Body of pancreas (tissue), 4 donors: ENCODE measurements at regions of chr14 and their contacts with region 1.

Region 1: DNA sequence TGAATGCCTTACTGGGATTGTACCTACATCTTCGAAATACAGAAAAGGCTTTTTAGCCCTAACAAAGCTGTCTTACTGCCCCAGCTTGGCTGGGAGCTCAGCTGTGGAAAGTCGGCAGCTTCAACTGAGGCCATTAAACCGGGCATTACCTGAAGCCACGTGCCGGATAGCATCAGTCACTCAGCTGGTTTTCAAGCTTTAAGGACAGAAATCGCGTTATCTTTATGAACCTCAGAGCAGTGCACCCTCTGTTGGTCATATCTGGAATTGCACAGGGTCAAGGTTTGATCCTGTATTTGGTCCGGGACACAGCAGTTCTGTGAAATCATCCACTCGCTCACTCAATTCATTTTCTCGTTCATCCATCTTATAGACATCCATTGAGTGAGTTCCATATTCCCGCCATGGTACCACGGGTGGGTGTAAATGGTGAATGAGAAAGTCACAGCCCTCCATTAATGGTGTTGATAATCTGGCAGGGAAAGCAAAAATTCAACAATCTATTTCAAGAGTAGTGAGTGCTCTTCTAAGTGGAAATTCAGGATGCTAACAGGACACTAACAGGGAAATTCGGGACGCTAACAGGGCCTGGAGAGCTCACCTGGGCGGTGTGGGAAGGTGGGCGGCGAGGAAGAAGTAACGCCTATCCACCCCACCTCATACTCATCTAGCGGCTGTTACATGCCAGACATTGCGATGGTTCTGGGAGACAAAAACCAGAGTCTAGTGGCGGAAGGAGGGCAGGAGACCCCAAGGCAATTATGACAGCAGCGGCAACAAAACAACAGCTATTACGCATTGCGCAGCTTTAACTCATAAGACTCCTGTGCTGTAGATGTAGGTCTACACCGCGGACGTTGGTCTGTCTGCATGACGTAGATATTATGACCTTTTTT is 60.6 kb upstream of the TCL1A start:
- DNase-seq: peak; percentile 69 to 80 (median 70)
- ATAC-seq: peak; percentile 74
- H3K4me3 ChIP-seq: no peak overlapping the region
- H3K27ac ChIP-seq: no peak overlapping the region
- H3K4me1 ChIP-seq: no peaks in the 10 kb centered on the region
- H3K27me3 ChIP-seq: no peaks in the 10 kb centered on the region
- CTCF ChIP-seq: peak; percentile 84 to 92 (median 89)
- POLR2A ChIP-seq: no peak

Region 2: DNA sequence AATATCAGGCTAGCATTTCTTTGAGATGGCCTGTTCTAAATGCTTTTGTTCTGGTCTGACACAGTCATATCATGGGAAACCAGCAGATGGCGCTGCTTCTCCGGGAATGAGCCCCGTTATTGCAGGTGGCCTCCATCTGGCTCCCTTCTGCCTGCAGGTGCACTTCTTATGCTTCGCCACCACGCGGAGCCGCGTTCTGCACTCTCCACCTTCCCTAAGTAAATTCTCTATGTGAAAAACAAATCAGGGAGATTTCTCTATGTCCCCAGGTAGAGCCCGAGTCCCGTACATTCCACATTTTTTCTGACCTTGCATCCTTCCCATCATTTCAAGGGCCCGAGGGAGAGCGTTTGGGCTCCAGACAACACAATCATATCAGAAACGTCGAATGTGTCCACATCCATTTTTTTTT is 213.5 kb before region 1 on chr14:
- intact Hi-C with region 1: loop called (anchors 5 kb)
- DNase-seq: peak; percentile 92 to 96 (median 94)
- ATAC-seq: peak; percentile 95
- H3K4me3 ChIP-seq: no peak overlapping the region
- H3K27ac ChIP-seq: no peak overlapping the region
- H3K4me1 ChIP-seq: peaks cover 12% of the 10 kb centered on the region
- H3K27me3 ChIP-seq: no peaks in the 10 kb centered on the region
- CTCF ChIP-seq: peak; percentile 96 to 100 (median 100)
- POLR2A ChIP-seq: no peak

Region 3: DNA sequence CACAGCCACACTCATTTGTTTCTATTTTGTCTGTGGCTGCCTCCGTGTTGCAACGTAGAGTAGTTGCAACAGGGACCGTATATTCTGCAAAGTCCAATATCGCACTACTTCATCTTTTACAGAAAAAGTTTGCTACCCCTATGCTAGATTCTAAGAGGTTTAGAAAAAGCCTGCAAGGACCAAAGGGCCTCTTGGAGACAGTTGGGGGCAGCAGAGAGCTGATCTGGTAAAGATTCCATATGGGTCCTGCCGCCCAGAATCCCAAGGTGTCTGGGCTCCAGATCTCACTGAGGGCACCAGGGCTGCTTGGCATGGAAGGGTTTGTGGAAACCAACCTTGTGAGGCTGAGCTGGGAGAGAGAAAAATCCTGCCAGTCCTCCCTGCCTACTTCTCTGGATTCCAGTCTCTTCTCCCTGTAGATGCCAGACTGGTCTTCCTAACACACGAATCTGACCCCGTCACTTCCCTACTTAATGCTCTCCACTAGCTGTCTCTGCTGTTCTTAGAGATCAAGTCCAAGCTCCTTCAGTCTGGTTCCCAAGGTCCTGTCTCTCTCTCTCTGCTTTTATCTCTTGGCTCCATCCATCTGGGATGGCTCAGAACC is 165.0 kb before region 1 on chr14:
- intact Hi-C with region 1: loop called (anchors 5 kb)
- DNase-seq: peak; percentile 69 to 80 (median 70)
- ATAC-seq: no peak
- H3K4me3 ChIP-seq: no peak overlapping the region
- H3K27ac ChIP-seq: no peak overlapping the region
- H3K4me1 ChIP-seq: no peaks in the 10 kb centered on the region
- H3K27me3 ChIP-seq: no peaks in the 10 kb centered on the region
- CTCF ChIP-seq: peak; percentile 66 to 78 (median 69)
- POLR2A ChIP-seq: no peak

Region 4: GRCh38 chr14:95979339-95980042 is 205.0 kb after region 1 on chr14:
- intact Hi-C with region 1: loop called (anchors 10 kb)
- DNase-seq: peak in 1 of 4 donors; percentile 8
- ATAC-seq: no peak
- H3K4me3 ChIP-seq: no peak overlapping the region
- H3K27ac ChIP-seq: no peak overlapping the region
- H3K4me1 ChIP-seq: no peaks in the 10 kb centered on the region
- H3K27me3 ChIP-seq: no peaks in the 10 kb centered on the region
- CTCF ChIP-seq: no peak
- POLR2A ChIP-seq: no peak